ENCODE measurements at regions of chr2 and their contacts with region 1.

Region 1: DNA sequence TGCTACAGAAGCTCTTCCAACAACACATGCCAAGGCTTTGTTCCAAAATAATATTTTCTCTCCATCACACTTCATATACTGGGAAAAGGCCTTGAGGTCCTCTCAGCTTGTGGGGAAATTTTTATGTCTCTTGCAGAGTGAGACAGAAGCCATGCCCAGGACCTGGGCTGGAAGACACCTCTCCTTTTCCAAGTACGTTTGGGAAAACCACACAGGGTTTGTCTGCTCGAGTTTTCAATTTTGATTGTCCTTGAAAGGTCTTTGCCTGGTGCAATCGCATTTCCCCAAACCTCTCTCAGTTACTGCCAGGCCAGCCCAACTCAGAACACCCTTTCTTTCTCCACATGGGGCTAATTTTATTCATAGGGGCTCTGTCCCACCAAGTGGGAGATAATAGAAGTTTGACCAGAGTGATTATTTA is 272.2 kb downstream of the OSR1 start:
- DNase-seq: no peak
- H3K4me3 ChIP-seq: no peak overlapping the region
- CTCF ChIP-seq: no peak

Region 2: GRCh38 chr2:19176955-19177354 is 90.7 kb after region 1 on chr2:
- in situ Hi-C with region 1: loop called (anchors 5 kb)
- DNase-seq: no peak
- H3K4me3 ChIP-seq: no peak overlapping the region
- CTCF ChIP-seq: no peak

Measured in astrocyte of the cerebellum (primary cell).